ENCODE measurements at regions of chr5 and their contacts with region 1.

Region 1: GRCh38 chr5:170183816-170184687 is 48.7 kb upstream of the C5orf58 start:
- DNase-seq: peak; percentile 65
- H3K4me3 ChIP-seq: no peak overlapping the region
- H3K27ac ChIP-seq: no peak overlapping the region
- H3K4me1 ChIP-seq: no peaks in the 10 kb centered on the region
- H3K27me3 ChIP-seq: no peaks in the 10 kb centered on the region
- CTCF ChIP-seq: peak; percentile 84 to 94
- POLR2A ChIP-seq: no peak

Region 2: GRCh38 chr5:170100066-170100943 is 83.7 kb before region 1 on chr5:
- CTCF ChIA-PET with region 1: interaction called, 252 read pairs
- POLR2A ChIA-PET with region 1: no interaction called
- dilution Hi-C with region 1: loop called (anchors 25 kb)
- intact Hi-C with region 1: loop called (anchors 1 kb)
- DNase-seq: peak; percentile 80
- H3K4me3 ChIP-seq: no peak overlapping the region
- H3K27ac ChIP-seq: no peak overlapping the region
- H3K4me1 ChIP-seq: peaks cover 19% of the 10 kb centered on the region
- H3K27me3 ChIP-seq: no peaks in the 10 kb centered on the region
- CTCF ChIP-seq: peak; percentile 63 to 71
- POLR2A ChIP-seq: no peak

Region 3: GRCh38 chr5:170151097-170151831 is 32.8 kb before region 1 on chr5:
- CTCF ChIA-PET with region 1: interaction called, 8 read pairs
- POLR2A ChIA-PET with region 1: interaction called, 3 read pairs
- dilution Hi-C with region 1: no loop called
- intact Hi-C with region 1: loop called (anchors 2 kb)
- DNase-seq: peak; percentile 88
- H3K4me3 ChIP-seq: no peak overlapping the region
- H3K27ac ChIP-seq: peak overlapping the region; percentile 87
- H3K4me1 ChIP-seq: peaks cover 17% of the 10 kb centered on the region
- H3K27me3 ChIP-seq: no peaks in the 10 kb centered on the region
- CTCF ChIP-seq: no peak
- POLR2A ChIP-seq: no peak

Region 4: DNA sequence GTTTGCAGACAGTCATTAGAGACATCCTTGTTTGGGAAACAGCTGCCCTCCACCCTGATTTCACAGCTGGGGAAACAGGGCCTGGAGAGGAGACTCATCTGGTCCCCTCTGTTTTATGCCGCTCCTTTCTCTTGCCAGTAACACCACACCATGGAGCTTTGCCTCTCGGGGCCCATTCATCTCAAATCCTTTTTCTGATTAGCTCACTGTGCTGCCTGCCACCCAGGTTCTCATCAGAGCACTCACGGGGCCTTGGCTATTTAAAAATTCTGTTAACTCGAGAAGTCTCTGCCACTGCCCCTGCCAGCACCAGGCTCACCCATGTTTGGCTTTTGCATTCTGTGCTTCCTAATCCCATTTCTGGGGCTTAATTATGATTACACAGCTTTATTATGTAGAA is 11.9 kb after region 1 on chr5:
- CTCF ChIA-PET with region 1: interaction called, 15 read pairs
- POLR2A ChIA-PET with region 1: no interaction called
- dilution Hi-C with region 1: no loop called
- intact Hi-C with region 1: no loop called
- DNase-seq: no peak
- H3K4me3 ChIP-seq: no peak overlapping the region
- H3K27ac ChIP-seq: no peak overlapping the region
- H3K4me1 ChIP-seq: no peaks in the 10 kb centered on the region
- H3K27me3 ChIP-seq: peaks cover 10% of the 10 kb centered on the region in 2 experiments
- CTCF ChIP-seq: no peak
- POLR2A ChIP-seq: no peak

Region 5: GRCh38 chr5:170434966-170435605 is 251.0 kb after region 1 on chr5:
- CTCF ChIA-PET with region 1: no interaction called
- POLR2A ChIA-PET with region 1: no interaction called
- dilution Hi-C with region 1: no loop called
- intact Hi-C with region 1: no loop called
- DNase-seq: peak; percentile 52
- H3K4me3 ChIP-seq: no peak overlapping the region
- H3K27ac ChIP-seq: no peak overlapping the region
- H3K4me1 ChIP-seq: no peaks in the 10 kb centered on the region
- H3K27me3 ChIP-seq: peaks cover 4% of the 10 kb centered on the region in 2 experiments
- CTCF ChIP-seq: peak; percentile 94 to 98
- POLR2A ChIP-seq: no peak